ENCODE measurements at regions of chr6 and their contacts with region 1.

Region 1: DNA sequence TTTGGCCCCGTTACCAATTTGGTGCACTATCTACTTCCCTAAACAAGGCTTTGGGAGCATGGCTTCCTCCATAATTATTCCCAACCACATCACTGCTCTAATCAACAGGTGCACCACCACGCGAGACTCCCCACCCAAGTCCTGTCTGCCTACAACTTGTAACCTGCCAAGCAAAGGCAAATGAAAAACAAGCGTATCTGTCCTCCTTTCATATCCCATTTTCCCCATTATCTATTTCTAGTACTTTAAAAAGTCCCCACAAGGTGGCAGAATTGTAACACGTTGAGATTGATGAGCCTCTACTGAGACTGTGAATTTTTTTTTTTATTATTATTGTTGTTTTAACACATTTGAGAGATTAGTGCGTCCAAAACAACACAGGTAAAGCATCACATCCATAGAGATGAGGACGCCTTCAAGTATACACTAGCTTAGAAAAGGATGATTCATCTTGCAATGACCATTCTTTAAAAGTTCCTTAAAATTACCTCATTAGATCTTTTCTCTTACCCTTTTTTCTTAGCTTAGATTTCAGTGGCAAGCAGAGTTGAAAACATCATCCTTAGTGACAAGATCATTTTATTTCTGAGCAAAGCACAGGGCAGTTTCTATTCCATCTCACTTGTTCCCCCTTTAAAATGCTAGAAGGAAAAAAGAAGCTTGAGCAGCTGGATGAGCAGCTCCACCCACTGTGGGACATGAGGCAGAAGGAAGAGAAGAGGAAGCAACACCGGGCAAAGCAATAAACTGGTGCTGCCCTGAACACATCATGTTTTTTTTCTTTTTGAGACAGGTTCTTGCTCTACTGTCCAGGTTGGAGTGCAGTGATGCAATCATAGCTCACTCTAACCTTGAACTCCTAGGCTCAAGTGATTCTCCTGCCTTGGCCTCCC is 210.8 kb downstream of the ARHGAP18 start:
- DNase-seq: no peak
- H3K4me3 Mint-ChIP-seq: peak overlapping the region; percentile 64
- H3K27ac Mint-ChIP-seq: peak overlapping the region; percentile 91
- H3K4me1 Mint-ChIP-seq: peaks cover 72% of the 10 kb centered on the region
- H3K27me3 Mint-ChIP-seq: no peaks in the 10 kb centered on the region

Region 2: DNA sequence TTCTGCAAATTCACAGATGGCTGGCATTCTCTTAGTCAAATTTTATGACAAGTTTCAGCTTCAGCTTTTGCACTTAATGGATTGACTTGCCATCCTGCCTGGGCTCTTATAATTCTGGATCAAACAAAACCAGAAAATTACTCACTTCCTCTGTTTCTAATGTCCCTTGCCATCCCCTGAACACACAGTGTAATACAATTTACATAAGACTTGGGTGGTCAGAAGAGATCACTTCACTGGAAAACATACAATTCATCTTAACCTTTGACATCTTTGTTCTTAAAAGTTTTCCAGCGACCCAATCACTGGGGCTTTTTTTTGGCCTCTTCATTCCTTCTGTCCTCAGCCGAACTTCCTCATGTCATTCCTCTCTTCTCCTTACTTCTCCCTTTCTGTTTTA is 11.8 kb after region 1 on chr6:
- CTCF ChIA-PET with region 1: interaction called, 33 read pairs
- intact Hi-C with region 1: no loop called
- DNase-seq: no peak
- H3K4me3 Mint-ChIP-seq: no peak overlapping the region
- H3K27ac Mint-ChIP-seq: no peak overlapping the region
- H3K4me1 Mint-ChIP-seq: no peaks in the 10 kb centered on the region
- H3K27me3 Mint-ChIP-seq: no peaks in the 10 kb centered on the region

Region 3: GRCh38 chr6:129598244-129599187 is 99.3 kb after region 1 on chr6:
- CTCF ChIA-PET with region 1: interaction called, 32 read pairs
- intact Hi-C with region 1: loop called (anchors 1 kb)
- DNase-seq: no peak
- H3K4me3 Mint-ChIP-seq: no peak overlapping the region
- H3K27ac Mint-ChIP-seq: no peak overlapping the region
- H3K4me1 Mint-ChIP-seq: no peaks in the 10 kb centered on the region
- H3K27me3 Mint-ChIP-seq: no peaks in the 10 kb centered on the region

Region 4: DNA sequence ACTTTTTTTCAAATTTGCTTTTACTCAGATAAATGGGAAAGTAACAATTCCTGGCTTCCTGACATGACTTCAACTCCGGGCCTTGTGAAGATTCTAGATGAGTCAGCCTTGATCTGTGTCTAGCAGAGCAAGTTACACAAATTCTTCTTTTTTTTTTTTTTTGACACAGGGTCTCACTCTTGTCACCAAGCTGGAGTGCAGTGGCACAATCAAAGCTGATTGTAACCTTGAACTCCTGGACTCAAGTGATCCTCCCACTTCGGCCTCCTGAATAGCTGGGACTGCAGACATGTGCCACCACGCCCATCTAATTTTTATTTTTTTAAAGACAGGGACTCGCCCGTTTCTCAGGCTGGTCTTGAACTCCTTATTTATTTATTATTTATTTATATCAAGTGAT is 218.1 kb after region 1 on chr6:
- CTCF ChIA-PET with region 1: no interaction called
- intact Hi-C with region 1: no loop called
- DNase-seq: no peak
- H3K4me3 Mint-ChIP-seq: no peak overlapping the region
- H3K27ac Mint-ChIP-seq: no peak overlapping the region
- H3K4me1 Mint-ChIP-seq: peaks cover 3% of the 10 kb centered on the region
- H3K27me3 Mint-ChIP-seq: no peaks in the 10 kb centered on the region

Region 5: DNA sequence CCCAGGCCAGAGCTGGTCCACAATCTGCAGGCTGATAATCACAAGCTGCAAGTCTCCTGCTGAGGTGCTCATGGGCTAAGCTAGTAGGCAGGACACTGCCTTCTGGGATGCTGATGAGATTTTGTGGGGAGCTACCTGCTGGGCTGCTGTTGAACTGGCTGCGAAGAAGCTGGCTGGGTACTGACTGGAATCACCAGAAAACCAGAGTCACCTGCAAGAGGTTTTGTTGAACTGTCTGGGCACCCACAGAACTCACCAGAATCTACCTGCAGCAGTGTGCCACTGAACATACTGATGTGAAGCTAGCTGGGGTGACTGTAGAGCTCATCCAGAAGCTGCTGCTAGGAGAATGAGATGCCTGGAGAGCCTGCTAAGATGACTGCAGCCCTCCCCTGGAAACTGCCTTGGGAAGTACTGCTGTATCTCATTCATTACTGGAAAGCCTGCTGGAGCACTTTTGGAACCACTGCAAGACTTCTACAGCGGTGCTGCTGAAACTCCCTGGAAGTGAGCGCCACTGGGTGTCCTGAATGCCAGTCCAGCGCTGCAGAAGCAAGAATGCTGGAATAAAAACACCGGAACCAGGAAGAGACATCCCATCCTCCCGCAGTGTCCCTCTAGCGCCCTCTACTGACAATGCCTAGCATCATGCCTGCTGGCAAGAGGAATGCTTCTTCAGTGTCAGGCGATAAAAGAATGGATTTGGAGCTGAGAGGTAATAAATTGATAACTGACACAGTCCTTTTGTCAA is 275.7 kb after region 1 on chr6:
- CTCF ChIA-PET with region 1: interaction called, 10 read pairs
- intact Hi-C with region 1: no loop called
- DNase-seq: peak; percentile 68
- H3K4me3 Mint-ChIP-seq: no peak overlapping the region
- H3K27ac Mint-ChIP-seq: no peak overlapping the region
- H3K4me1 Mint-ChIP-seq: peaks cover 3% of the 10 kb centered on the region
- H3K27me3 Mint-ChIP-seq: no peaks in the 10 kb centered on the region

Region 6: GRCh38 chr6:130020907-130021629 is 521.9 kb after region 1 on chr6:
- CTCF ChIA-PET with region 1: interaction called, 3 read pairs
- intact Hi-C with region 1: loop called (anchors 1 kb)
- DNase-seq: peak; percentile 90
- H3K4me3 Mint-ChIP-seq: peak overlapping the region; percentile 92
- H3K27ac Mint-ChIP-seq: peak overlapping the region; percentile 84
- H3K4me1 Mint-ChIP-seq: peaks cover 29% of the 10 kb centered on the region
- H3K27me3 Mint-ChIP-seq: no peaks in the 10 kb centered on the region

Measured in activated naive CD4-positive, alpha-beta T cell treated with anti-CD3 and anti-CD28 coated beads for 36 hours (primary cell).